ENCODE measurements at regions of chr12 and their contacts with region 1.

Region 1: GRCh38 chr12:27343255-27344000 is 10.8 kb downstream of the BMAL2 start:
- DNase-seq: peak; percentile 97
- ATAC-seq: peak; percentile 95
- H3K4me3 ChIP-seq: no peak overlapping the region; the same call in 1 of the 2 replicates
- H3K27ac ChIP-seq: peak overlapping the region; percentile 75
- H3K4me1 ChIP-seq: peaks cover 17% of the 10 kb centered on the region
- H3K27me3 ChIP-seq: no peaks in the 10 kb centered on the region
- CTCF ChIP-seq: no peak
- POLR2A ChIP-seq: no peak
- RAD21 ChIP-seq: 0 out of 2 replicates have a peak, but pooled peaks have one; percentile 1

Region 2: DNA sequence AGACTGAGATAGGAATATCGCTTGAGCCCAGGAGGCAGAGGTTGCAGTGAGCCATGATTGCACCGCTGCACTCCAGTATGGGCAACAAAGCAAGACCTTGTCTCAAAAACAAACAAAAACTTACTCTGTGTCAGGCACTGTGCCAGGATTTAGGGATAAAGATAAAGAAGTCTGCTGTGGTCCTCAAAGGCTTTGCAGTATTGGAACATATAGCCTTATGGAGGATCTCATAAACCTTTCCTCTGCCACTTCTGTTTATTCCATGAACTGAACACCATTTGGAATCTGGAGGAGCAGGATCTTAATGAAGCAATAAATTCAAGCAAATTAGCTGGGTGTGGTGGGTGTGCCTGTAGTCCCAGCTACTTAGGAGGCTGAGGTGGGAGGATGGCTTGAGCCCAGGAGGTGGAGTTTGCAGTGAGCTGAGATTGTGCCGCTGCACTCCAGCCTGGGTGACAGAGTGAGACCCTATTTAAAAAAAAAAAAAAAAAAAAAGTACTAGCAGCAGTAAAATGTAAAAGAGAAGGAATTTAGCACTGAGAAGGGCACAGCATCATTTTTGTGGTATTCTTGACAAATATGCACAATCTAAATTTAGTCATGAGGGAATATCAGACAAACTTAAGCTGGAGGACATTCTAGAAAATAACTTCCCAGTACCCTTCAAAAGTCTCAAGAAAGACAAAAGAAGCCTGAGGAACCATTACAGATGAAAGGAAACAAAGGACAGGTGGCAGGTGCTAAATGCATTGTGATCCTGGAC is 16.3 kb after region 1 on chr12:
- CTCF ChIA-PET with region 1: no interaction called
- POLR2A ChIA-PET with region 1: no interaction called
- dilution Hi-C with region 1: no loop called
- in situ Hi-C with region 1: no loop called
- intact Hi-C with region 1: loop called (anchors 1 kb)
- DNase-seq: peak; percentile 43
- ATAC-seq: no peak; the same call in 1 of the 2 replicates
- H3K4me3 ChIP-seq: no peak overlapping the region
- H3K27ac ChIP-seq: no peak overlapping the region
- H3K4me1 ChIP-seq: peaks cover 16% of the 10 kb centered on the region
- H3K27me3 ChIP-seq: no peaks in the 10 kb centered on the region
- CTCF ChIP-seq: no peak
- POLR2A ChIP-seq: no peak
- RAD21 ChIP-seq: no peak

Region 3: GRCh38 chr12:27573972-27574371 is 230.5 kb after region 1 on chr12:
- CTCF ChIA-PET with region 1: no interaction called
- POLR2A ChIA-PET with region 1: no interaction called
- dilution Hi-C with region 1: no loop called
- in situ Hi-C with region 1: no loop called
- intact Hi-C with region 1: no loop called
- DNase-seq: peak; percentile 97
- ATAC-seq: peak; percentile 72
- H3K4me3 ChIP-seq: no peak overlapping the region
- H3K27ac ChIP-seq: 0 out of 2 replicates have a peak overlapping the region, but pooled peaks have one; percentile 25
- H3K4me1 ChIP-seq: peaks cover 17% of the 10 kb centered on the region
- H3K27me3 ChIP-seq: no peaks in the 10 kb centered on the region
- CTCF ChIP-seq: no peak
- POLR2A ChIP-seq: no peak
- RAD21 ChIP-seq: no peak

Region 4: GRCh38 chr12:27595231-27595642 is 251.8 kb after region 1 on chr12:
- CTCF ChIA-PET with region 1: no interaction called
- POLR2A ChIA-PET with region 1: no interaction called
- dilution Hi-C with region 1: no loop called
- in situ Hi-C with region 1: no loop called
- intact Hi-C with region 1: no loop called
- DNase-seq: peak; percentile 89
- ATAC-seq: peak; percentile 63
- H3K4me3 ChIP-seq: no peak overlapping the region
- H3K27ac ChIP-seq: no peak overlapping the region
- H3K4me1 ChIP-seq: peaks cover 7% of the 10 kb centered on the region
- H3K27me3 ChIP-seq: no peaks in the 10 kb centered on the region
- CTCF ChIP-seq: no peak
- POLR2A ChIP-seq: no peak
- RAD21 ChIP-seq: no peak

Measured in IMR-90 (cell line).